ENCODE measurements at regions of chr6 and their contacts with region 1.

Region 1: DNA sequence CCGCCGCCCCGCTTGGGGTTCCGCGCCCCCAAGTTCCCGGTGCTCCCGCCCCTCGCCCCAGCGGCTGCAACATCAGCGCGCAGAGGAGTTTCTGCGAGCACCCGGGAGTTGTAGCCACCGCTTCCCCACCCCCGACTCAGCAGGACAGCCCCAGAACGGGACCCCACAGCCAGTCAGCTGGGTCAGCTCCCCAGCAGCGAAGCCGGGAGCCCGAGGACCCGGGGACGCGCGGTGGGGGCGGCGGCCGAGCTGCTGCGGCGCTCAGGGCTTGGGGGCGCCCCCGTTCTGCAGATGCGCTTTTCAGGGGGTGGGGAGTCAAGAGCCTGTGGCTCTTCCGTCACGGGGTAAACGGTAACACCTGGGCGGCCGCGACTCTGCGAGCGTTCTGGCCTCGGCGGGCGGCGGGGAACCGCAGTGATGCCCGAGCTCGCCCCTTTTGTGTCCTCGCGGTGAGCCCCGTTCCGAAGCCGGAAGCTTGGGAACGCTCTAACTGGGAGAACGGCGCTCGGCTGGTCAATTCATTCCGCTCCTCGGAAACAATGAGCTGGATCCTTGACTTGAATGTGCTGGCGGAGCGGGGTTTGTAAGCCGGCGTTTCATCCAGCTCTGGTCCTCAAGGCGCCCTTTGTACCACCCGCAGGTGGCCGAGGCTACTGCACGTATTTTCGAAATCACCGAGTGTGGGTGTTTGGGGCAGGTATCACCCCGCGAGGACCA is 774 bp downstream of the PLEKHG1 start:
- DNase-seq: peak; percentile 90
- ATAC-seq: peak; percentile 65
- H3K4me3 Mint-ChIP-seq: peak overlapping the region; percentile 80
- H3K27ac Mint-ChIP-seq: peak overlapping the region; percentile 88
- H3K4me1 Mint-ChIP-seq: peaks cover 23% of the 10 kb centered on the region
- H3K27me3 Mint-ChIP-seq: peaks cover 24% of the 10 kb centered on the region

Region 2: GRCh38 chr6:150466196-150466595 is 134.3 kb before region 1 on chr6:
- CTCF ChIA-PET with region 1: no interaction called
- POLR2A ChIA-PET with region 1: no interaction called
- intact Hi-C with region 1: no loop called
- DNase-seq: no peak
- ATAC-seq: no peak
- H3K4me3 Mint-ChIP-seq: no peak overlapping the region
- H3K27ac Mint-ChIP-seq: no peak overlapping the region
- H3K4me1 Mint-ChIP-seq: no peaks in the 10 kb centered on the region
- H3K27me3 Mint-ChIP-seq: no peaks in the 10 kb centered on the region

Region 3: DNA sequence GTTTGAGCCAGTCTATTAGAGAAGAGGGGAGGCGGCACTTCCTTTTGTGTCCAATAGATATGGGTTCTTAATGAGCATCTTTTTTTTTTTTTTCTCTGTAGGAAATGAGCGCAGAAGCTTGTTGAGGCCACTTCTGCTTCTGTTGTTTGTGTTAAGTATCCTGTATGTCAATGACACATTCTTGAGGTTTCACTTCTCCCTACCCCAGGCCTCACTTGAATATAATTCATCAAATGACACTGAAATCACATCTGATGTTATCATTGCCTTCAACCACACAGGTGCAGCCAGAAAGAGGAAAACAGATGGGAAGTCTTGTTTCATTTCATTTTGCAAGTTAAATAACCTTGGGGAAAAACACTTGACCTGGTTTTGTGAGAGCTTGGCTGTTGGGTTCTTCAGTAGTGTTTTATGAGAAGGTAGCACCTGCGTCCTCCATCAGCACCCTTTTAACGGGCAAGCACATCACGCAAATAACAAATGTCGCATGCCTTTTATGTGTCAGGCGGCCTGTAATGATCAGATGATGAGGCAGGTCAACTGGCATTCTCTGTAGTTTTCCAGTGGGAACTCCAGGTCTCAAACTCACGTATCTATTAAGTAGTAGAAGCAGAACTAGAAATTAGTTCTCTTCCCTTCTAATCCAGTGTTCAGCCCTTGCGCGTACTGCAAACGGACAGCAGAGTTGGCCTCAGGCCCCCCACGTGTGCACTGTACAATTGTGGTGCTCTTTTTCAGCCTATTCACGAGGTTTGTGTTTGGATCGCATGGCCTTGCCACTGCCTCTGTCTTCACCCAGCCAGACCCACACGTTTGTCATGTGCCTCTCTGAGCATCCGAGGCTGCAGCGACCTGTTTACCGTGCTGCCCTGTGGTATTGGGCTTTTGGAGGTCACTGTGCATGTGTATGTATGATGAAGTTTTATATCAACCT is 22.7 kb after region 1 on chr6:
- CTCF ChIA-PET with region 1: interaction called, 3 read pairs
- POLR2A ChIA-PET with region 1: no interaction called
- intact Hi-C with region 1: loop called in 1 of 2 experiments (anchors 1 kb)
- DNase-seq: peak; percentile 11
- ATAC-seq: peak; percentile 94
- H3K4me3 Mint-ChIP-seq: no peak overlapping the region
- H3K27ac Mint-ChIP-seq: no peak overlapping the region
- H3K4me1 Mint-ChIP-seq: peaks cover 19% of the 10 kb centered on the region
- H3K27me3 Mint-ChIP-seq: peaks cover 9% of the 10 kb centered on the region

Region 4: GRCh38 chr6:150632785-150633485 is 32.5 kb after region 1 on chr6:
- CTCF ChIA-PET with region 1: interaction called, 6 read pairs
- POLR2A ChIA-PET with region 1: interaction called, 24 read pairs
- intact Hi-C with region 1: loop called in 1 of 2 experiments (anchors 1 kb)
- DNase-seq: peak; percentile 12
- ATAC-seq: peak; percentile 60
- H3K4me3 Mint-ChIP-seq: peak overlapping the region; percentile 70
- H3K27ac Mint-ChIP-seq: peak overlapping the region; percentile 82
- H3K4me1 Mint-ChIP-seq: peaks cover 66% of the 10 kb centered on the region
- H3K27me3 Mint-ChIP-seq: peaks cover 9% of the 10 kb centered on the region

Region 5: GRCh38 chr6:150685860-150686259 is 85.4 kb after region 1 on chr6:
- CTCF ChIA-PET with region 1: interaction called, 11 read pairs
- POLR2A ChIA-PET with region 1: no interaction called
- intact Hi-C with region 1: no loop called
- DNase-seq: peak; percentile 81
- ATAC-seq: peak; percentile 92
- H3K4me3 Mint-ChIP-seq: no peak overlapping the region
- H3K27ac Mint-ChIP-seq: no peak overlapping the region
- H3K4me1 Mint-ChIP-seq: no peaks in the 10 kb centered on the region
- H3K27me3 Mint-ChIP-seq: no peaks in the 10 kb centered on the region

Region 6: DNA sequence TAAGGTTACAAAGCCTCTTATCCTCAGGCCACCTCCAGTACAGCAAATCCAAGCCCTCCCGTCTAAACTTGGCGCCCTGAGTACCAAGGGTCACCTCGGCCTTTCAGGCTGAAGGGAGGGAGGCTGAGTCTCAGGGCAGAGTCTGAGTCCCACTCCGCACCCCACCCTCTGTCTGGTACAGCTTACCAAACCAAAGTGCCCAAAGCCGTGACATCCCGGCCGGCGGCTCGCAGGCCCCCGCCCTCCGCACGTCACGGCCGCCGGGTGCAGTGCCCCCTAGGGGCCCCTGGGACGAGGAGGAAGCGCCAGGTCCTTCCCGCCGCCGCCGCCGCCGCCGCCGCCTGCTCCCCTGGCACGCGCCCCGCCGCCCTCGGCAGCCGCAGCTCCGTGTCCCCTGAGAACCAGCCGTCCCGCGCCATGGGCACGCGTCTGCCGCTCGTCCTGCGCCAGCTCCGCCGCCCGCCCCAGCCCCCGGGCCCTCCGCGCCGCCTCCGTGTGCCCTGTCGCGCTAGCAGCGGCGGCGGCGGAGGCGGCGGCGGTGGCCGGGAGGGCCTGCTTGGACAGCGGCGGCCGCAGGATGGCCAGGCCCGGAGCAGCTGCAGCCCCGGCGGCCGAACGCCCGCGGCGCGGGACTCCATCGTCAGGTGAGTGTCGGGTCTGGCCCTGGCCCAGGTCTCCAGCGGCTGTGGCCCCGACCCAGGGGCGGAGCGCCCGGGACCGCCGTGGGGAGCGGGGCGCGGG is 265.1 kb after region 1 on chr6 and contains the start of gene MTHFD1L:
- CTCF ChIA-PET with region 1: no interaction called
- POLR2A ChIA-PET with region 1: no interaction called
- intact Hi-C with region 1: loop called in 1 of 2 experiments (anchors 2 kb)
- DNase-seq: peak; percentile 89
- ATAC-seq: peak; percentile 74
- H3K4me3 Mint-ChIP-seq: peak within 1 kb of the TSS; percentile 81
- H3K27ac Mint-ChIP-seq: peak within 1 kb of the TSS; percentile 94
- H3K4me1 Mint-ChIP-seq: peaks cover 38% of the 10 kb centered on the region
- H3K27me3 Mint-ChIP-seq: peaks cover 12% of the 10 kb centered on the region
- total RNA-seq, gene MTHFD1L: 103 to 129 TPM

Region 7: GRCh38 chr6:151379933-151380847 is 779.7 kb after region 1 on chr6:
- CTCF ChIA-PET with region 1: no interaction called
- POLR2A ChIA-PET with region 1: no interaction called
- intact Hi-C with region 1: loop called in 1 of 2 experiments (anchors 10 kb)
- DNase-seq: peak; percentile 39
- ATAC-seq: peak; percentile 71
- H3K4me3 Mint-ChIP-seq: peak overlapping the region; percentile 77
- H3K27ac Mint-ChIP-seq: peak overlapping the region; percentile 99
- H3K4me1 Mint-ChIP-seq: peaks cover 65% of the 10 kb centered on the region
- H3K27me3 Mint-ChIP-seq: no peaks in the 10 kb centered on the region